Posterior vena cava (tissue), 2 donors: ENCODE measurements at regions of chrX and their contacts with region 1.

Region 1: DNA sequence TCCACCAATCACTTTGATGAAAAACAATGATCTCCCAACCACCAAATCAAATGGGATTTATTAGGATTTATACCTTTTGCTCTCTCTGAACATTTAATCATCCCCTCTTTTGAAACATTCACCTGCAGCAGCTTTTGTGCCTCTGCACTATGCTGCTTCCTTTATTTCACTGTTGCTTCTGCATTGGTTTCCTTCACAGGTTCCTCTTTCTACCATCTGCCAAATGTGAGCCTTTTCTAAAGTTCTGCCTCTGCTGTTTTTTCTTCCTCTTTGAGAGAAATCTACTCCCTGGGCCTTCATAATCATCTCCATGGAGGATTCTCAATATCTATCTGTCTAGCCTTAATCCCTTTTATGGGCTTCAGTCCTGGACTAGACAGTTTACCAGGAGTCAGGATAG is 24.7 kb downstream of the CUL4B start:
- DNase-seq: no peak

Region 2: DNA sequence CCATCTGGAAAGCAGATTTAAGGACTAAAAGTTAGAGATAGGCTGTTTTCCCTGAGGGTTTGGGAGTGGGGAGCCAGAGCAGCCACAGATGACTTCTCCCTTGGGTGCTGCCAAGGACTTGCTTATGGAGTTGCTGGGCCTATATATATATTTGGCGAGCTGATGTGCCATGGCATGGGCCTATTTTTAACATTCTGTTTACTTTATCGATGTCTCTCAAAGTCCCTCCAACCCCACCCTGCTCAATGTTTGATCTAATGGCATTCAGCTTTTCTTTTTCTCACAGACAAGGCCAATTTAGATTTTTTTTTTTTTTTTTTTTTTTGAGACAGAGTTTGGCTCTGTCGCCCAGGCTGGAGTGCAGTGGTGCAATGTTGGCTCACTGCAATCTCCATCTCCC is 30.8 kb after region 1 on chrX:
- intact Hi-C with region 1: loop called in 1 of 2 experiments (anchors 1 kb)
- DNase-seq: no peak

Region 3: DNA sequence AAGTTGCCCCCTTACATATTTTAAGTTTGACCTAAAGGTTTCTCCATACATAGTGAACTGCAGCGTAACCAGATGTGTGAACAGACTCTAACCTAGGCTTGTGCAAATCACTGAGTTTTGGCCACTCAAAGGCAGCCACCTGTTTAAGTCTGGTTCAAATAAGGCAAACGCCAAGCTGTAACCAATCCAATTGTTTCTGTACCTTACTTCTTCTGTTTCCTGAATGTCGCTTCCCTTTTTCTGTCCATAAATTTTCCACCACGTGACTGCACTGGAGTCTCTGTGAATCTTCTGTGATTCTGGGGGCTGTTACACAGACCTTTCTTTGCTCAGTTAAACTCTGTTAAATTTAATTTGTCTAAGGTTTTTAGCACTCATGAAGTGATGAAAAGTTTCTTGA is 1130.1 kb after region 1 on chrX:
- intact Hi-C with region 1: no loop called
- DNase-seq: no peak

Region 4: DNA sequence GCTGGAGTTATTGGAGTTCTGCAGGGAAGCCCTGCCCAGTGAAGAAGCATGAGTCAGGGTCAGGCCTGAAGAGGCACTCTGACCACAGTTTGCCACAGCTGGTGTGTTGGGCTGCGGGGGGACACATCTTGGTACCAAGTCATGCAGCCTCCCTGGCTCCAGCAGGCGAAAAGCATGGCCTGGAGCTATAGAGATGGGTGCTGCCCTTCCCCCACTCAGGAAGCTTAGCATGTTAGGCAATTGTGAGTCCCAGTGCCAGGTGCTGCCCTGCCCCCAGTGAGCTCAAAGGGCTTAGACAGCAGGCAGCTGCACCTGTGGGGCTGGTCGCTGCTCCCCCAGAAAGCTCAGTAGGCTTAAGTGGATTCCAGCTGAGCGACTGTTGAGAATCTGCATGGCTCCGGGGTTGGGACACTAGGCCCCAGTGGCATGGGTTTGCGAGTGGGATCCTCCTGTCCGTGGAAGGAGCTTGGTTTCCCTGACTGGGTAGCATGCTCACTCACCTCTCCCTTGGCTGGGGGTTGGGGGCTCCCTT is 1266.9 kb after region 1 on chrX:
- intact Hi-C with region 1: no loop called
- DNase-seq: no peak